HepG2 (cell line): ENCODE measurements at regions of chr2 and their contacts with region 1.

Region 1: GRCh38 chr2:182435754-182436153 is 8.9 kb upstream of the PDE1A start:
- DNase-seq: no peak
- ATAC-seq: no peak
- H3K4me3 ChIP-seq: no peak overlapping the region
- H3K27ac ChIP-seq: no peak overlapping the region
- H3K4me1 ChIP-seq: no peaks in the 10 kb centered on the region
- H3K27me3 ChIP-seq: no peaks in the 10 kb centered on the region
- CTCF ChIP-seq: no peak
- EP300 ChIP-seq: no peak
- POLR2A ChIP-seq: no peak
- RAD21 ChIP-seq: no peak

Region 2: GRCh38 chr2:182368446-182368845 is 67.3 kb before region 1 on chr2:
- CTCF ChIA-PET with region 1: no interaction called
- POLR2A ChIA-PET with region 1: no interaction called
- in situ Hi-C with region 1: no loop called
- intact Hi-C with region 1: loop called (anchors 1 kb)
- DNase-seq: no peak
- ATAC-seq: no peak
- H3K4me3 ChIP-seq: no peak overlapping the region
- H3K27ac ChIP-seq: no peak overlapping the region
- H3K4me1 ChIP-seq: no peaks in the 10 kb centered on the region
- H3K27me3 ChIP-seq: no peaks in the 10 kb centered on the region
- CTCF ChIP-seq: no peak
- EP300 ChIP-seq: no peak
- POLR2A ChIP-seq: no peak
- RAD21 ChIP-seq: no peak

Region 3: DNA sequence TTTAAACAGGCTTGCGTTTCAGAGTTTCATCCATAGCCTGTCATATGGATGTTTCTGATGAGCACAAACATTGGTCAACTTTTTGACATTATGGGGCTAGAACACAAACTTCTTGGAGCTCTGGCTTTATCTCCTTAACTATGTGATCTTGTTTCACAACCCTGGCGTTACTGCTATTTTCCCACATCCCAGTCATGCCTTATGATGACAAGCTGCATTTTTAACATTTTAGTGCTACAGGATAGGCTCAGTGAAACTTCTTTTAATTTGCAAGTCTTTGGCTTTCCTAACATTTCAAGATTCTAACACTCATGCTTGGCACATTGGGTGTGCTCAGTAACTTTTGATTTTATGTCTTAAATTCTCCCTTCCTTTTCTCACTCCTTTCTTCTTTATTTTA is 12.1 kb after region 1 on chr2:
- CTCF ChIA-PET with region 1: no interaction called
- POLR2A ChIA-PET with region 1: no interaction called
- in situ Hi-C with region 1: no loop called
- intact Hi-C with region 1: no loop called
- DNase-seq: no peak
- ATAC-seq: no peak
- H3K4me3 ChIP-seq: no peak overlapping the region
- H3K27ac ChIP-seq: no peak overlapping the region
- H3K4me1 ChIP-seq: no peaks in the 10 kb centered on the region
- H3K27me3 ChIP-seq: no peaks in the 10 kb centered on the region
- CTCF ChIP-seq: no peak
- EP300 ChIP-seq: no peak
- POLR2A ChIP-seq: no peak
- RAD21 ChIP-seq: no peak

Region 4: GRCh38 chr2:182482511-182482910 is 46.8 kb after region 1 on chr2:
- CTCF ChIA-PET with region 1: no interaction called
- POLR2A ChIA-PET with region 1: no interaction called
- in situ Hi-C with region 1: no loop called
- intact Hi-C with region 1: no loop called
- DNase-seq: no peak
- ATAC-seq: no peak
- H3K4me3 ChIP-seq: no peak overlapping the region
- H3K27ac ChIP-seq: no peak overlapping the region
- H3K4me1 ChIP-seq: no peaks in the 10 kb centered on the region
- H3K27me3 ChIP-seq: no peaks in the 10 kb centered on the region
- CTCF ChIP-seq: no peak
- EP300 ChIP-seq: no peak
- POLR2A ChIP-seq: no peak
- RAD21 ChIP-seq: no peak

Region 5: DNA sequence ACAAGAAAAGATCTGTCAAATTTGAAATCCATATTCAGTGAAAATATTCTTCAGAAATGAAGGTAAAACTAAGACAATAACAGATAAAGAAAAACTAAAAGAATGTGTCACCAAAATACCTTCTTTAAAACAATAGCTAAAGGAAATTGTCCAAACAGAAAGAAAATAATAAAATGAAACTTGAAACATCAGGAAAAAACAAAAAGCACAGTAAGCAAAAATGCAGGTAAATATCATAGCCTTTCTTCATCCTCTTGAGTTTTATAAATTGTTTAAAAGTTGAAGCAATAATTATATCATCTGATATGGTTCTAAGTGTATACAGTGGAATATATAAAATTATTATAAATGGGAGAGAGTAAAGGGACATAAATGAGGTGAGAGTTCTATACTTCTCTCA is 94.9 kb after region 1 on chr2:
- CTCF ChIA-PET with region 1: no interaction called
- POLR2A ChIA-PET with region 1: no interaction called
- in situ Hi-C with region 1: no loop called
- intact Hi-C with region 1: no loop called
- DNase-seq: no peak
- ATAC-seq: no peak
- H3K4me3 ChIP-seq: no peak overlapping the region
- H3K27ac ChIP-seq: no peak overlapping the region
- H3K4me1 ChIP-seq: no peaks in the 10 kb centered on the region
- H3K27me3 ChIP-seq: no peaks in the 10 kb centered on the region
- CTCF ChIP-seq: no peak
- EP300 ChIP-seq: no peak
- POLR2A ChIP-seq: no peak
- RAD21 ChIP-seq: no peak